ENCODE measurements at regions of chr4 and their contacts with region 1.

Region 1: DNA sequence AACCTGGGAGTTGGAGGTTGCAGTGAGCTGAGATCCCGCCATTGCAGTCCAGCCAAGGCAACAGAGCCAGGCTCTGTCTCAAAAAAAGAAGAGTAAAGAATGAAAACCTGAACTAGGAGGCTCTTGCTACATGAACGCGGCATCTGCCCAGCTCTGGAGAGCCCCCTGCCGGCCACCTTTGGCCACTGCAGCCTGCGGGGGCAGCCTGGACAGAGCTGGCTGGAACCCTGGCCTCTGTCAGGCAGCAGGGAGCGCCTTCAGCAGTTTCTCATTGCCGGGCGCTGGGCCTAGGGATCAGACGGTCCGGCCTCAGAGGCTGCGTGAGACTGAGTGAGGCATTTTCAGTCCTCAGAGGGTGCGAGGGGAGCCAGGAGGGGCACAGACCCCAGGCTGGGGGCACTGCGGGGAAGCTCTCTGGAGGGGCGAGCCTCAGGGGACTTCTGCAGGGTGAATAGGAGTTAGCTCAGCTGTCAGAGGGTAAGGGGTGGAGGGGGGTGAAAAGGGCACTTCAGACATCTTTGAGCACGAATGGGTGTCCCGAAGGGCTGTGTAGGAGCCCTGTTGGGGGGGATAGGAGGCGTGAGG is 17.5 kb downstream of the DOK7 start:
- DNase-seq: peak; percentile 79
- ATAC-seq: peak; percentile 76
- H3K4me3 Mint-ChIP-seq: no peak overlapping the region
- H3K27ac Mint-ChIP-seq: no peak overlapping the region
- H3K4me1 Mint-ChIP-seq: peaks cover 2% of the 10 kb centered on the region
- H3K27me3 Mint-ChIP-seq: peaks cover 19% of the 10 kb centered on the region

Region 2: DNA sequence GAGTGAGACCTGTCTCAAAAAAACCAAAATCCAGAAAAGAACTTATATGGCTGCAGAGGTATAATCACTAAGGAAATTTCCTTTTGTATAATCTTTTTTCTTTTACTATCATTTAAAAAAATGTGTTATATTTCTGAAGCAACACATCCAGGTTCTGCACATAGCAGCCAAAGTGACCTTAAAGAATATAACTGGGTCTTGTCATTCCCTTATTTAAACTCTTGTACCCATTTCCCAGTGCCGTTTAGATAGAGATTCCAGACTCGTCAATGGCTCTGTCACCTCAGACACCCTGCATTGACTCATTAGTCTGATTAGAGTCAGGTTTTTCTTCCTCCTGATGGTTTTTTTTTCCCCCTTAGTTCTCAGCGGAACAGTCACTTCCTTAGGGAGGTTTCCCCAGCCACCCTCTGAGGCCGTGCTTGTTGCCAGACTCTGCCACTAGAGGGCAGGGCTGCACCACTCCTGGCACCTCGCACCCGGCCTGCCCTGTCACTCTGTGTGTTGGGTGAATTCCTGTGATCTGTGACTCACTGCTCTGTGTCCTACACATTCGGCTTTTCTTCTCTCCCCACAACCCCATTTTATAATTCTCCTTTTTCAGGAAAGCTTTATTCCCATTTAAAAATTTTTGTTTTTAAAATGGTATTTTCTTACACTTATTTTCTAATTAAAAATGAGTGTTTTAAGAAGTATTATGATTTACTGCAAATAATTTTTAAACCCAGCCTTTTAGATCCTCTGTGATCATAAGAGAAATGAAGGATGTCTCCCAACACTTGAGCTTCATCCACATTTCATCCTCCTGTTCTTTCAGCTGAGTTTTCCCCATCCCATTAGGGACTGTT is 374.1 kb before region 1 on chr4:
- CTCF ChIA-PET with region 1: interaction called, 16 read pairs
- DNase-seq: peak; percentile 89
- ATAC-seq: peak; percentile 100
- H3K4me3 Mint-ChIP-seq: no peak overlapping the region
- H3K27ac Mint-ChIP-seq: peak overlapping the region; percentile 33
- H3K4me1 Mint-ChIP-seq: peaks cover 6% of the 10 kb centered on the region
- H3K27me3 Mint-ChIP-seq: no peaks in the 10 kb centered on the region

Region 3: DNA sequence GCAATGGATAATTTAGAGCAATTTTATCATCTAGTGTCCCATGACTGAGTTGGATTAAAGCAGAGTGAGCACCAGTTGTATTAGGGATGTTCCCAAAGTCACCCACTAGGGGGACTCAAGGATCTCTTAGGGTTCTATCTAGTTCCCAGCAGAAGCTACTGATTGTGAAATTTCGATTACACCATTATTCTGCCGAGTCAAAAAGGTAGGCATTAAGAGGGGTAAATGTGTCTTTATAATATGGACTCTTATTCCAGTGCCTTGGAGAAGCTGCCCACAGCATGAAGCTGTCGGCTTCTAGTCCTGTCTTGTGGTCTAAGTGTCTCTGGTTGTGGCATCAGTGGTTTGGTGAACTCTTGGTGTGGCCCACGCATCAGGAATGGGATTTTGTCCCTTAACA is 134.5 kb before region 1 on chr4:
- CTCF ChIA-PET with region 1: interaction called, 11 read pairs
- DNase-seq: peak; percentile 50
- ATAC-seq: peak; percentile 88
- H3K4me3 Mint-ChIP-seq: no peak overlapping the region
- H3K27ac Mint-ChIP-seq: no peak overlapping the region
- H3K4me1 Mint-ChIP-seq: peaks cover 11% of the 10 kb centered on the region
- H3K27me3 Mint-ChIP-seq: peaks cover 4% of the 10 kb centered on the region

Region 4: DNA sequence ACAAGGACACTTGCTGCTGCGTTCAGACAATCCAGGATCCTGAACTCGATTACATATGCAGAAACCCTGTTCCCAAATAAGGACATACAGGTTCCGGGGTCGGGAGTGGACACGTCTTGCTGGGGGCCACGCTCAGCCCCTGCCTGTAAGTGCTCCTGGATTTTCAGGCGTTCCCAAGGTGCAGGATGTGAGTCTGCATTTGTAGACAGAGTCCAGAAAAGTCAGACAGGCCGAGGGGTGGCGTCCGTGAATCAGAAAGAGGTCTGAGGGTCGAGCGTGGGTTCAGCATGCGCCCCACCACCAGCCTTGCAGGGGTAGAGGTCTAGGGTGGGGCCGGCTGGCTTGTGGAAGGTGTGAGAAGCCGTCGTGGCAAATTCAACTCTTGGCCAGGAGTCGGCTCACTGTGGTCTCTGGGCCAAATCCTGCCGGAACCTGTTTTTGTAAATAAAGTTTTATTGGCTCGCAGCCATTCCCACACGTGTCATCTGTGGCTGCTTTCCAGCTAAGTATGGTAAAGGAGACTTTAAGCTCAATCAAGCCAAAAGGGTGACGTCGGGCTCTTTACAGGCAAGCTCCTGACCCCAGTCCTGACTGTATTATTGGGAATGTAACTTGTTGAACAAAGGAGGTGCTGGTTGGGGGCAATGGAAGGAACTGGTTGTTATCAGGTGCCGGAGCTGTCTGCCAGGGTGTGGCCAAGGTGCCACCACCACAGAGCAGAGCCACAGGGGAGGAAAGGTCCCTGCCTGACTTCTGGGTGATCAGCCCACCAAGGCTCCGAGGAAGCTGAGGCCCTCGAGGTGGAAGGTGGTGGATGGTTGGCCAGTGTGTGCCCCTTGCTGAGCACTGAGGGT is 10.1 kb before region 1 on chr4:
- CTCF ChIA-PET with region 1: interaction called, 10 read pairs
- DNase-seq: no peak
- ATAC-seq: no peak
- H3K4me3 Mint-ChIP-seq: no peak overlapping the region
- H3K27ac Mint-ChIP-seq: no peak overlapping the region
- H3K4me1 Mint-ChIP-seq: no peaks in the 10 kb centered on the region
- H3K27me3 Mint-ChIP-seq: no peaks in the 10 kb centered on the region

Region 5: DNA sequence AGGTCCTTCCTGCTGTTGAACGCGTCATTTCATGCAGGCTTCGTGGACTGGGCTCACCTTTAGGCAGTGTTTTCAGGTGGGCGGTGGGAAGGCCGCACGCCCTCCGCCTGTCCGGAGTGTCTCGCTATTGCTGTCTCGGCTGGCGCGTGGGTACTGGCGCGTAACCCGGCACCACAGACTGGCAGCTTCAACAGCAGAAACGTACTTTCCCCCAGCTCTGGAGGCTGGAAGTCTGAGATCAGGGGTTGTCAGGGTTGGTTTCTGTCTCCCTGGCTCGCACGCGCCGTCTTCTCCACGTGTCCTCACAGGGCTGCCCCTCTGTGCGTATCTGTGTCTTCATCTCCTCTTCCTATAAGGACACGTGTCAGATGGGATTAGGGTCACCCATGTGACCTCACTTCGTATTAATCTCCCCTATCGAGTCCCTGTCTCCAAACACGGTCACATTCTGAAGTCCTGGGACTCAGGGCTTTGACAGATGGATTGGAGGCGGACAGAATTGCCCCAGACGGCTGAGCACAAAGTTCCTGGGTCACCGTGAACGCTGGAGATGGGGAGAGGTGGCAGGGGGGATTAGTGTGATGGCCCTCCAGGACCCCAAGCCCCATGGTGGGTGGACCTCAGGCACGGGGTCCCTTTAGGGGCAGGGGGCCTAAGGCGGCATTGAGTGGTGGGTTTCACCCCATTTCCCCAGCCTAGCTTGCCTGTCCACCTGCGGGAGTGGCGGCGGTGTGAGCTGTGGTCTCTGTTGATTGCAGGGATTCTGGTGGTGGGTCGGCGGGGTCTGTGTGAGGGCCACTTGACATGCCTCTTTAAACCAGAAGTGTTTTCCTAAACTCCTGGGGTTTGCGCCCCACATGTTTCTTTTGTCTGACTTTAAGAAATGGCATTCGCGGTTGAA is 135.0 kb after region 1 on chr4:
- CTCF ChIA-PET with region 1: no interaction called
- DNase-seq: no peak
- ATAC-seq: no peak
- H3K4me3 Mint-ChIP-seq: no peak overlapping the region
- H3K27ac Mint-ChIP-seq: no peak overlapping the region
- H3K4me1 Mint-ChIP-seq: peaks cover 2% of the 10 kb centered on the region
- H3K27me3 Mint-ChIP-seq: peaks cover 9% of the 10 kb centered on the region

Region 6: GRCh38 chr4:3630468-3631287 is 150.1 kb after region 1 on chr4:
- CTCF ChIA-PET with region 1: no interaction called
- DNase-seq: no peak
- ATAC-seq: no peak
- H3K4me3 Mint-ChIP-seq: no peak overlapping the region
- H3K27ac Mint-ChIP-seq: no peak overlapping the region
- H3K4me1 Mint-ChIP-seq: no peaks in the 10 kb centered on the region
- H3K27me3 Mint-ChIP-seq: no peaks in the 10 kb centered on the region

Region 7: DNA sequence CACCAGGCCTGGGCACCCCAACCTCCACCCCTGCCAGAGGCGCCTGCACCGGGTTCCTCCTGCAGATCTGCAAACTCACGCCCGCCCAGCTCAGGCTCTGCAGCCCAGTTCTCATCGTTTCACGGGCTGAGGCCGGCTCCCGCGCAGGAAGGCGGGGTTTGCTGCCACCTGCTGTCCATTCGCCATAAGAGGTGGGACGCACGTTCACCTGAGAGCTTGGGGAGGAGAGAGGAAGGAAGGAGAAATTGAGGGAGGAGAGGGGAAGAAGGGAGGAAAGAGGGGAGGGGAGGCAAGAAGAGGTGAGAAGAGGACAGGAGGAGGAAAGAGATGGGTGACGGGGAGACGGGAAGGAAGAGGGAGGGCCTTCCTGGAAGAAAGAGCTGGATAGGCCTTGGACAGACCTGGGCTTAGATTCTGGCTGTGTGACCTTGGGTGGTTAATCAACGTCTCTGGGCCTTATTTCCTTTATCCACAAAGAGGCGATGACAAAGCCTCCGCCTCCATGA is 400.0 kb after region 1 on chr4:
- CTCF ChIA-PET with region 1: interaction called, 11 read pairs
- DNase-seq: peak; percentile 78
- ATAC-seq: peak; percentile 90
- H3K4me3 Mint-ChIP-seq: no peak overlapping the region
- H3K27ac Mint-ChIP-seq: no peak overlapping the region
- H3K4me1 Mint-ChIP-seq: peaks cover 11% of the 10 kb centered on the region
- H3K27me3 Mint-ChIP-seq: peaks cover 54% of the 10 kb centered on the region

Measured in activated CD8-positive, alpha-beta memory T cell treated with anti-CD3 and anti-CD28 coated beads, Interleukin-2, amount 10 ng/mL, durations not matched to agents 7 days and 5 days (primary cell).